ENCODE measurements at regions of chr18 and their contacts with region 1.

Region 1: GRCh38 chr18:67515945-67516538 is 478 bp downstream of the DSEL start:
- H3K4me3 ChIP-seq: peak overlapping the region; percentile 79
- H3K27ac ChIP-seq: no peak overlapping the region
- H3K4me1 ChIP-seq: peaks cover 3% of the 10 kb centered on the region; the same call in 1 of the 2 replicates
- CTCF ChIP-seq: peak; percentile 53; the same call in 1 of the 2 replicates

Region 2: DNA sequence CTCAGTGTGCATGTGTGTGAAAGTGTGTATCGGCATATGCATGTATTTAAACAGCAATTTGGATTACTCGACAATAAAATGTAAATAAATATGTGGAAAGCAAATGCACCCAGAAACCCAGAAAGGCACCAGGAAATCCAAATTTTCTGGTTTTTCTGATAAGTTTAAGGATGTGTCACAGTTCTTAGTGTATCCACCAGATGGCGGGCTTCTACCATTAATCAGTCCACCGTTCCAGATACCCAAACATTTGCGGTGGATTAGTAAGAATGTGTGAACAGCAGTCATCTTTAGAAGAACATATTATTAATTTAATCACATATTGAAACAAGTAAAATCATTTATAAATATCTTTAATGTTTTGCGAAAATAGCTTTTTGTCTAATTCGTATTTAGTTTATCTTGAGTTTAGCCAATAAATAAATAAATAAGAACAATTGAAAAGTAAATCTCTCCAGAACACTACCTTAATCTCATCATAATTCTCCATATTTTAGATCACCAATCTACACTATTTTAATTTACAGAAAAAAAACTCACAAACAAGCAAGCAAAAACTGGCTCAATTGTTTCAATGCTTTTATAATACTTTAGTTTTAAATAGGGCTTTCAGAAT is 298.4 kb before region 1 on chr18:
- CTCF ChIA-PET with region 1: interaction called, 14 read pairs
- POLR2A ChIA-PET with region 1: no interaction called
- H3K4me3 ChIP-seq: no peak overlapping the region
- H3K27ac ChIP-seq: no peak overlapping the region
- H3K4me1 ChIP-seq: no peaks in the 10 kb centered on the region
- CTCF ChIP-seq: no peak

Region 3: GRCh38 chr18:67402543-67402942 is 113.5 kb before region 1 on chr18:
- CTCF ChIA-PET with region 1: no interaction called
- POLR2A ChIA-PET with region 1: no interaction called
- H3K4me3 ChIP-seq: no peak overlapping the region
- H3K27ac ChIP-seq: no peak overlapping the region
- H3K4me1 ChIP-seq: no peaks in the 10 kb centered on the region
- CTCF ChIP-seq: no peak

Region 4: GRCh38 chr18:67670024-67670543 is 154.0 kb after region 1 on chr18:
- CTCF ChIA-PET with region 1: no interaction called
- POLR2A ChIA-PET with region 1: no interaction called
- H3K4me3 ChIP-seq: no peak overlapping the region
- H3K27ac ChIP-seq: no peak overlapping the region
- H3K4me1 ChIP-seq: no peaks in the 10 kb centered on the region
- CTCF ChIP-seq: no peak

Region 5: GRCh38 chr18:67710639-67711038 is 194.6 kb after region 1 on chr18:
- CTCF ChIA-PET with region 1: interaction called, 10 read pairs
- POLR2A ChIA-PET with region 1: interaction called, 6 read pairs
- H3K4me3 ChIP-seq: no peak overlapping the region
- H3K27ac ChIP-seq: no peak overlapping the region
- H3K4me1 ChIP-seq: no peaks in the 10 kb centered on the region
- CTCF ChIP-seq: no peak

Measured in HEK293 (cell line).